H1 (cell line): ENCODE measurements at regions of chr15 and their contacts with region 1.

Region 1: DNA sequence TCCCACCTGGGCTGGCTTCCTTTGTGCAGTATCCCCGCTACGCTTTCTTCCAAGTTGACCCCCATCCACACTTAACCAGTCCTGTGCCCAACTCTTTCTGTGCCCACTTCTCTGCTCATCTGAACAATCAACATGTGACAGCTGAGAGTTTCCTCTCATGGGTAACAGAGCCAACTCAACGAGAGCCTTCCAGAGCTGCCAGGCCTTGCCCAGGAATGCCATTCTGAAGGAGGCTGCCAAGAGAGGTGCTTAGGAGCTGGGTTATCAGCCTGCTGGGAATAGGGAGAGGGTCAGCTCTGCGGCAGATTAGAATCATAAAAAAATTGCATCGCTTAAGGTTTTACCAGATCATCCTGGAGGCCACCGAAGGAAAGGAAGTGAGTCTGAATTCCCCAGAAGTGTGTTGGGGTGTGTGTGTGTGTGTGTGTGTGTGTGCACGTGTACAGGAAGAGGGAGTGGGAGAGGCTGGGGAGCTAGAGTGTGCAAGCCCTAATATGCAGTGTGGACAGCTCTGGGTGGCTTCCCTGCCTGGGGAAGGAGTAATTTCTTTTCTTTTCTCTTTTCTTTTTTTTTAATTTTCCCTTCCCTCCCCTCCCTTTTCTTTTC is 66.7 kb downstream of the ITGA11 start:
- DNase-seq: no peak
- H3K4me3 ChIP-seq: no peak overlapping the region
- H3K27ac ChIP-seq: no peak overlapping the region
- H3K4me1 ChIP-seq: no peaks in the 10 kb centered on the region; a peak in 1 of 7 replicates
- H3K27me3 ChIP-seq: no peaks in the 10 kb centered on the region
- CTCF ChIP-seq: no peak
- EP300 ChIP-seq: no peak
- POLR2A ChIP-seq: no peak
- RAD21 ChIP-seq: no peak

Region 2: GRCh38 chr15:68335251-68335650 is 30.0 kb before region 1 on chr15:
- CTCF ChIA-PET with region 1: interaction called, 15 read pairs
- POLR2A ChIA-PET with region 1: no interaction called
- DNase-seq: no peak
- H3K4me3 ChIP-seq: no peak overlapping the region
- H3K27ac ChIP-seq: no peak overlapping the region
- H3K4me1 ChIP-seq: peaks cover 2 to 7% (median 6%) of the 10 kb centered on the region in 4 experiments; a peak in 4 of 7 replicates
- H3K27me3 ChIP-seq: no peaks in the 10 kb centered on the region
- CTCF ChIP-seq: no peak
- EP300 ChIP-seq: no peak
- POLR2A ChIP-seq: no peak
- RAD21 ChIP-seq: no peak

Region 3: DNA sequence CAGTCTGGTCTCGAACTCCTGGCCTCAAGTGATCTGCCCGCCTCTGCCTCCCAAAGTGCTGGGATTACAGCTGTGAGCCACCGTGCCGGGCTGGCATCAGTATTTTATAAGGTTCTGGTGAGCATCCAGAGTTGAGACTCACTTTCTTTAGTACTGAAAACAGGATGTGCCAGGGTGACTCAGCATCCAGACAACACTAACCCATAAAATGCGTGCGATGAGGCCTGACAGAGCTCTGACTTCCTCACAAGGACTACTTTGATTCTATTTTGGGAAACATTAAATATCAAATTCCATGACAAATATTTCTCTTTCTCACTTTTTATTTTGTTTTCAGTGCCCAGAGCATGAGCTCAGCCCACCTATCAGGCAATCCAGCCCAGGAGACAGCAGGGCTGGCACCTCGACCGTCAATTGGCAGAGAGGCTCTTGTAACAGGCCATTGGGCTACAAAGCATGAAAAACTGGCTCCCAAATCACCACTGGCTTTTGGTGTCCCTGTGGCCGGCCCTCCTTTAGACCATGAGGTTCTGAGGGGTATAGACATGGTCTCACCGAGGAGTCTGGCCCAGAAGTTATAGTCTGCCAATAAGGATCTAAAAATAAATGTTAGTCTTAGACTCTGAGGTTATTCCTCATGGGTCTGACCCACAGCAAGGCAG is 12.7 kb before region 1 on chr15:
- CTCF ChIA-PET with region 1: interaction called, 17 read pairs
- POLR2A ChIA-PET with region 1: interaction called, 3 read pairs
- DNase-seq: no peak
- H3K4me3 ChIP-seq: no peak overlapping the region
- H3K27ac ChIP-seq: no peak overlapping the region
- H3K4me1 ChIP-seq: no peaks in the 10 kb centered on the region
- H3K27me3 ChIP-seq: no peaks in the 10 kb centered on the region
- CTCF ChIP-seq: no peak
- EP300 ChIP-seq: no peak
- POLR2A ChIP-seq: no peak
- RAD21 ChIP-seq: no peak

Region 4: DNA sequence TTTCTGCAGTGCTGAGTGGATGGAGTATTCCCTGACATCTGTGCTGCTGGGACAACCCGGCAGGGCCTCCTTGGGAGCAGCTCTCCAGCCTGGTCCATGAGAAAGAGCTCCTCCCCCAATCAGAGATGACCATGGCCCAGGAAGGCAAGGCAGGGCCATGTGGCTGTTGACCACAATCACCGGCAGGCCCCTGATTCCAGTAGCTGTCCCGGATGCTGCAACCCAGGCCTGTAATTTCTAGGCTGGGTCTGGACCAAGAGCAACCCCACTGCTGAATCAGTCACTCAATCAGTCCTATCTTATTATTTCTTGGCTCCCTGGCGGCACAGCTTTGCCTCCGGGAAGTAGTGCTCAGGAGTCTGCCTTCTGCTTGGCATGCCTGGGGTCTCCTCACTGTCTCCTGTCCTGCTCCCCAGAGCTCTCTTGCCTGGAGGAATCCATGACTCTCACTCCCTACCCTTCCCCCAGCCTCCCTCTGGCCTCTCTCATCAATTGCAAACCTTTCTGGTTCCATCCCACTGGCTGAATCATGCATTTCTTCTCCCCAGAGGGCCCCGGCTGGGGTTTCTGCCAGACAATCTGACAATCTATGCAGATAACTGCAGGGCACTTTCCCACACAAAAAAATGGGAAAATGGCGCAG is 99.3 kb after region 1 on chr15:
- CTCF ChIA-PET with region 1: no interaction called
- POLR2A ChIA-PET with region 1: no interaction called
- DNase-seq: no peak
- H3K4me3 ChIP-seq: no peak overlapping the region
- H3K27ac ChIP-seq: no peak overlapping the region
- H3K4me1 ChIP-seq: no peaks in the 10 kb centered on the region
- H3K27me3 ChIP-seq: no peaks in the 10 kb centered on the region; a peak in 2 of 7 replicates
- CTCF ChIP-seq: no peak
- EP300 ChIP-seq: no peak
- POLR2A ChIP-seq: no peak
- RAD21 ChIP-seq: no peak